PC-9 (cell line): ENCODE measurements at regions of chr11 and their contacts with region 1.

Region 1: GRCh38 chr11:59963733-59964132 is at the start of gene OOSP4A:
- DNase-seq: no peak
- H3K4me3 ChIP-seq: no peak within 1 kb of the TSS
- H3K27ac ChIP-seq: no peak within 1 kb of the TSS
- H3K4me1 ChIP-seq: no peaks in the 10 kb centered on the region
- H3K27me3 ChIP-seq: no peaks in the 10 kb centered on the region
- CTCF ChIP-seq: no peak
- total RNA-seq, gene OOSP4A: not detected in 2 replicates

Region 2: GRCh38 chr11:59953463-59954218 is 10.1 kb before region 1 on chr11:
- CTCF ChIA-PET with region 1: no interaction called
- POLR2A ChIA-PET with region 1: no interaction called
- intact Hi-C with region 1: no loop called
- DNase-seq: no peak
- H3K4me3 ChIP-seq: no peak overlapping the region
- H3K27ac ChIP-seq: no peak overlapping the region
- H3K4me1 ChIP-seq: no peaks in the 10 kb centered on the region
- H3K27me3 ChIP-seq: peaks cover 14% of the 10 kb centered on the region
- CTCF ChIP-seq: no peak

Region 3: DNA sequence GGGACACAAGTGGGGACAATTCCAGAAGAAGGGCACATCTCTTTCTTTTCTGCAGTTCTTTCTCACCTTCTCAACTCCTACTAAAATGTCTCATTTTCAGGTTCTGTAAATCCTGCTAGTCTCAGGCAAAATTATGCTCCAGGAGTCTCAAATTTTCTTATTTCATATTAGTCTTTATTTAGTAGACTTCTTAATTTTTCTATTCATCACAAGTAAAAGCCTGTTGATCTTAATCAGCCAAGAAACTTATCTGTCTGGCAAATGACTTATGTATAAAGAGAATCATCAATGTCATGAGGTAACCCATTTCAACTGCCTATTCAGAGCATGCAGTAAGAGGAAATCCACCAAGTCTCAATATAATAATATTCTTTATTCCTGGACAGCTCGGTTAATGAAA is 124.6 kb after region 1 on chr11 and contains the start of gene MS4A2:
- CTCF ChIA-PET with region 1: interaction called, 18 read pairs
- POLR2A ChIA-PET with region 1: no interaction called
- intact Hi-C with region 1: no loop called
- DNase-seq: no peak
- H3K4me3 ChIP-seq: no peak within 1 kb of the TSS
- H3K27ac ChIP-seq: no peak within 1 kb of the TSS
- H3K4me1 ChIP-seq: no peaks in the 10 kb centered on the region
- H3K27me3 ChIP-seq: peaks cover 39% of the 10 kb centered on the region
- CTCF ChIP-seq: no peak
- total RNA-seq, gene MS4A2: not detected in 2 replicates